ENCODE measurements at regions of chr6 and their contacts with region 1.

Region 1: GRCh38 chr6:123855506-123855905 is 51.8 kb downstream of the NKAIN2 start:
- DNase-seq: no peak
- H3K4me3 ChIP-seq: no peak overlapping the region
- H3K27ac ChIP-seq: no peak overlapping the region
- H3K4me1 ChIP-seq: no peaks in the 10 kb centered on the region
- H3K27me3 ChIP-seq: no peaks in the 10 kb centered on the region
- CTCF ChIP-seq: no peak
- POLR2A ChIP-seq: no peak

Region 2: GRCh38 chr6:123745895-123746294 is 109.6 kb before region 1 on chr6:
- intact Hi-C with region 1: no loop called
- DNase-seq: peak in 2 of 7 donors; percentile 1 to 8
- H3K4me3 ChIP-seq: no peak overlapping the region
- H3K27ac ChIP-seq: no peak overlapping the region
- H3K4me1 ChIP-seq: no peaks in the 10 kb centered on the region
- H3K27me3 ChIP-seq: no peaks in the 10 kb centered on the region
- CTCF ChIP-seq: no peak
- POLR2A ChIP-seq: no peak

Region 3: DNA sequence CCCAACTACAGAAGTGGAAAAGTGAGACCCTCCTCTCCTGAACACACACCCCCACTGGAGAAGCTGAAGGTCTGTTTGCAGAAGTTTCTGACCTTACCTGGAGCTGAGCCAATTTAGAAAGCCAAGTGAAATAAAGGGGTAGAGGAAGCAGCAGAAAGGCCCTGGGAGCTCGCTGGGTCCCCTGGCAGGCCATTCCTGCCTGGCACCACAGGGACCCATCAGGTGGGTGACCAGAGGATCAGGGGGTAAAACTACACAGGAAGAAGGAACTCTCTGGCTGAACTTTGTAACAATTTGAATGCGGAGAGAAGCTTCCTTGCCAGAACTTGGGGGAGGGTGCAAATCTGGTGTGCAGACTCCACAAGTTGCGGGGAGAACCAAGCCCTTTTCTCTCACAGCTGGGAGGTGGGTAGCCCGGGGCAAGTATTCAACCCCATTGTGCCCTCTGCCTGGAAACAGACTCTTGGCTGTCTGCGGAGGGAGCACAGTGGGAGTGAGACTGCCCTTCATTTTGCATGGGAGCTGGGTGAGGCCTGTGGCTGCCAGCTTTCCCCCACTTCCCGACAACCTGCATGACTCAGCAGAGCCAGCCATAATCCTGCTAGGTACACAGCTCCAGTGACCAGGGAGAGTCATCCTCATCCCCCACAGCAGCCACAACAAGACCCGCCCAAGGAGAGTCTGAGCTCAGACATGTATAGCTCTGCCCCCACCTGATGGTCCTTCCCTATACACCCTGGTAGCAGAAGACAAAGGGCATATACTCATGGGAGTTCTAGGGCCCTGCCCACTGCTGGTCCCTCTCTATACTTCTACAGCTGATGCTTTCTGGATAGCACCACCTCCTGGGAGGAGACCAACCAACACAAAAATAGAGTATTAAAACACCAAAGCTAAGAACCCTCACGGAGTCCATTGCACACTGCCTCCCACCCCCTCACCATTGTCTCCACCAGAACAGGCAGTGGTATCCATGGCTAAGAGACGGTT is 1268.6 kb after region 1 on chr6:
- intact Hi-C with region 1: loop called in 1 of 2 experiments (anchors 10 kb)
- DNase-seq: no peak
- H3K4me3 ChIP-seq: no peak overlapping the region
- H3K27ac ChIP-seq: no peak overlapping the region
- H3K4me1 ChIP-seq: no peaks in the 10 kb centered on the region
- H3K27me3 ChIP-seq: no peaks in the 10 kb centered on the region
- CTCF ChIP-seq: no peak
- POLR2A ChIP-seq: no peak

Measured in adrenal gland (tissue), 19 donors.